ENCODE measurements at regions of chrX and their contacts with region 1.

Region 1: DNA sequence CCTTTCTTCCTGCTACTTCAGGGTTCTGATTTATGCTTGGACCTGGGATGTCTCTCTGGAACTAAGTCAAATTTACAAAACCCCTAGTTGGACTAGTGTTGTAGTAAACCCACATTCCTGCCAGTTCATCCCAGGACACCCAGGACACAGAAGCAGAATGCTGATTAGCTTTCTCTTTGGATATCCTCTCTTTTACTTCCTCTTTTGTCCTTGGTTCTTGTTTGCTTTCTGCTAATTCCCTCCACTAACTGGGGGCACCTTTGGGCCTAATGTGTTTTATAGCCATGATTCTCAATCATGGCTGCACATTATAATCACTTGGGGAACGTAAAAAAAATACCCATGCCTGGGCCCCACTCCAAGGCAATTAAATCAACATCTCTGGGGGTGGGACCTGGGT is 42.5 kb downstream of the LANCL3 start:
- DNase-seq: no peak
- H3K4me3 Mint-ChIP-seq: no peak overlapping the region
- H3K27ac Mint-ChIP-seq: no peak overlapping the region
- H3K4me1 Mint-ChIP-seq: no peaks in the 10 kb centered on the region
- H3K27me3 Mint-ChIP-seq: no peaks in the 10 kb centered on the region

Region 2: GRCh38 chrX:37666516-37666915 is 52.6 kb after region 1 on chrX:
- CTCF ChIA-PET with region 1: no interaction called
- intact Hi-C with region 1: loop called (anchors 10 kb)
- DNase-seq: no peak
- H3K4me3 Mint-ChIP-seq: no peak overlapping the region
- H3K27ac Mint-ChIP-seq: no peak overlapping the region
- H3K4me1 Mint-ChIP-seq: no peaks in the 10 kb centered on the region
- H3K27me3 Mint-ChIP-seq: no peaks in the 10 kb centered on the region

Measured in activated naive CD4-positive, alpha-beta T cell treated with anti-CD3 and anti-CD28 coated beads for 36 hours (primary cell).